ENCODE measurements at regions of chr12 and their contacts with region 1.

Region 1: GRCh38 chr12:130747867-130748740 is 32.0 kb upstream of the RIMBP2 start:
- DNase-seq: no peak
- H3K4me3 ChIP-seq: no peak overlapping the region
- H3K27me3 ChIP-seq: no peaks in the 10 kb centered on the region
- CTCF ChIP-seq: peak; percentile 88

Region 2: DNA sequence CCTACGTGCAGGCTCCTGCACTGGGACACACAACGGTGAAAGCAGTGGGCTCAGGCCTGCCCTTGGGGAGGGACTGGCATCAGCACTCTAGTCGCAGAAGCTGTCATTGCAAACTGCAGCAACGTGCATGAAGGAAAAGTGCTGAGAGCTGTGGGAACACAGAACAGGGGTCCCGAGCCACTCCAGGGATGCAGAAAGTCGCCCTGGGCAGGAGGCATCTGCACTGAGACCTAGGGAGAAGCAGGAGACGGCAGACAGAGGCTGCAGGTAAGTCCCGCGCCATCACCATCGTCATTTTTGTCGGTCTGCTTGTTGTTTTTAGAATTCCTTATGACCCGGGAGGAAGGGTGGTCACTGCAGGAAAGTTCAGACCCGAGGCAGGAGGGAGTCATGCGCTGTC is 10.4 kb before region 1 on chr12:
- CTCF ChIA-PET with region 1: interaction called, 18 read pairs
- POLR2A ChIA-PET with region 1: no interaction called
- DNase-seq: no peak
- H3K4me3 ChIP-seq: no peak overlapping the region
- H3K27me3 ChIP-seq: no peaks in the 10 kb centered on the region
- CTCF ChIP-seq: no peak

Measured in BJ (cell line).